ENCODE measurements at regions of chr15 and their contacts with region 1.

Region 1: GRCh38 chr15:100106732-100107131 is 235.0 kb downstream of the ADAMTS17 start:
- DNase-seq: no peak
- H3K4me3 ChIP-seq: no peak overlapping the region
- H3K27ac ChIP-seq: no peak overlapping the region
- H3K4me1 ChIP-seq: no peaks in the 10 kb centered on the region
- H3K27me3 ChIP-seq: no peaks in the 10 kb centered on the region
- CTCF ChIP-seq: no peak
- EP300 ChIP-seq: no peak
- POLR2A ChIP-seq: no peak
- RAD21 ChIP-seq: no peak

Region 2: GRCh38 chr15:100095541-100096247 is 11.0 kb before region 1 on chr15:
- CTCF ChIA-PET with region 1: interaction called, 10 read pairs
- POLR2A ChIA-PET with region 1: no interaction called
- DNase-seq: no peak
- H3K4me3 ChIP-seq: no peak overlapping the region
- H3K27ac ChIP-seq: no peak overlapping the region
- H3K4me1 ChIP-seq: peaks cover 0 to 3% (median 0%) of the 10 kb centered on the region in 4 experiments; a peak in 1 of 7 replicates
- H3K27me3 ChIP-seq: no peaks in the 10 kb centered on the region
- CTCF ChIP-seq: no peak
- EP300 ChIP-seq: no peak
- POLR2A ChIP-seq: no peak
- RAD21 ChIP-seq: no peak

Region 3: GRCh38 chr15:100250176-100250800 is 143.6 kb after region 1 on chr15:
- CTCF ChIA-PET with region 1: no interaction called
- POLR2A ChIA-PET with region 1: no interaction called
- DNase-seq: no peak
- H3K4me3 ChIP-seq: no peak overlapping the region
- H3K27ac ChIP-seq: no peak overlapping the region
- H3K4me1 ChIP-seq: peaks cover 0 to 2% (median under 1%) of the 10 kb centered on the region in 4 experiments; a peak in 5 of 7 replicates
- H3K27me3 ChIP-seq: no peaks in the 10 kb centered on the region
- CTCF ChIP-seq: no peak
- EP300 ChIP-seq: no peak
- POLR2A ChIP-seq: no peak
- RAD21 ChIP-seq: no peak